PC-9 (cell line): ENCODE measurements at regions of chr1 and their contacts with region 1.

Region 1: GRCh38 chr1:36008546-36009197 is 75.2 kb upstream of the TEKT2 start:
- DNase-seq: peak; percentile 57 to 87
- H3K4me3 ChIP-seq: no peak overlapping the region
- H3K27ac ChIP-seq: peak overlapping the region; percentile 71
- H3K4me1 ChIP-seq: peaks cover 18% of the 10 kb centered on the region
- H3K27me3 ChIP-seq: no peaks in the 10 kb centered on the region
- CTCF ChIP-seq: no peak

Region 2: GRCh38 chr1:36034692-36035091 is 26.0 kb after region 1 on chr1:
- CTCF ChIA-PET with region 1: interaction called, 3 read pairs
- POLR2A ChIA-PET with region 1: no interaction called
- intact Hi-C with region 1: loop called (anchors 1 kb)
- DNase-seq: peak; percentile 25 to 98
- H3K4me3 ChIP-seq: no peak overlapping the region; the same call in 1 of the 2 replicates
- H3K27ac ChIP-seq: peak overlapping the region; percentile 94
- H3K4me1 ChIP-seq: peaks cover 24% of the 10 kb centered on the region
- H3K27me3 ChIP-seq: no peaks in the 10 kb centered on the region
- CTCF ChIP-seq: no peak